Activated T-helper 1 cell treated with anti-CD3 and anti-CD28 coated beads, Interleukin-12 subunit alpha, Interleukin-12 subunit beta, Interleukin-2, Interleukin-4 antibody, amounts not matched to agents 30 ng/mL and 10 ng/mL and 1 ng/mL, durations not matched to agents 14 hours and 24 hours and 36 hours (primary cell): ENCODE measurements at regions of chr1 and their contacts with region 1.

Region 1: GRCh38 chr1:201015551-201016091 is 7.9 kb downstream of the KIF21B start:
- DNase-seq: no peak
- H3K4me3 Mint-ChIP-seq: peak overlapping the region; percentile 57
- H3K27ac Mint-ChIP-seq: peak overlapping the region; percentile 99
- H3K4me1 Mint-ChIP-seq: peaks cover 92% of the 10 kb centered on the region
- H3K27me3 Mint-ChIP-seq: no peaks in the 10 kb centered on the region

Region 2: GRCh38 chr1:200938955-200939354 is 76.7 kb before region 1 on chr1:
- intact Hi-C with region 1: no loop called
- DNase-seq: no peak
- H3K4me3 Mint-ChIP-seq: no peak overlapping the region
- H3K27ac Mint-ChIP-seq: no peak overlapping the region
- H3K4me1 Mint-ChIP-seq: no peaks in the 10 kb centered on the region
- H3K27me3 Mint-ChIP-seq: peaks cover 22% of the 10 kb centered on the region

Region 3: GRCh38 chr1:200991097-200991614 is 24.5 kb before region 1 on chr1:
- intact Hi-C with region 1: no loop called
- DNase-seq: no peak
- H3K4me3 Mint-ChIP-seq: no peak overlapping the region
- H3K27ac Mint-ChIP-seq: no peak overlapping the region
- H3K4me1 Mint-ChIP-seq: no peaks in the 10 kb centered on the region
- H3K27me3 Mint-ChIP-seq: no peaks in the 10 kb centered on the region

Region 4: DNA sequence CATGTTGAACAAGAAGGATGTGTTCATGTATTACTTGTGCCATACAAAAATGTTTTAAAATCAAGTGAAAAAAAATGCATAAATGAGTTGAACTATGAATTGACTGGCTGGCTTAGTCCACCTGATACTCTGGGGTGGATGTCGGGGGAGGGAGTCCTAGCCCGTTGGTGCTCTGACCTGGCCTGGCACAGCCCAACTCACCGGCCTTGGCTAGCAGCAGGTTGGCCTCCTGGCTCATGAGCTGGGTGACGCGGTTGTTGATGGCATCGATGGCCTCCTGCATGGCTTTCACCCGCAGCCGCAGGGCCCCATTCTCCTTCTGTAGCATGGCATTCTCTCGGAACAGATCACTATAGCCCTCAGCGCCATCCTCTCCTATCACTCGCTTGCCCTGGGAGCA is 13.7 kb before region 1 on chr1:
- intact Hi-C with region 1: loop called (anchors 1 kb)
- DNase-seq: no peak
- H3K4me3 Mint-ChIP-seq: no peak overlapping the region
- H3K27ac Mint-ChIP-seq: no peak overlapping the region
- H3K4me1 Mint-ChIP-seq: no peaks in the 10 kb centered on the region
- H3K27me3 Mint-ChIP-seq: no peaks in the 10 kb centered on the region